H1 (cell line): ENCODE measurements at regions of chr2 and their contacts with region 1.

Region 1: DNA sequence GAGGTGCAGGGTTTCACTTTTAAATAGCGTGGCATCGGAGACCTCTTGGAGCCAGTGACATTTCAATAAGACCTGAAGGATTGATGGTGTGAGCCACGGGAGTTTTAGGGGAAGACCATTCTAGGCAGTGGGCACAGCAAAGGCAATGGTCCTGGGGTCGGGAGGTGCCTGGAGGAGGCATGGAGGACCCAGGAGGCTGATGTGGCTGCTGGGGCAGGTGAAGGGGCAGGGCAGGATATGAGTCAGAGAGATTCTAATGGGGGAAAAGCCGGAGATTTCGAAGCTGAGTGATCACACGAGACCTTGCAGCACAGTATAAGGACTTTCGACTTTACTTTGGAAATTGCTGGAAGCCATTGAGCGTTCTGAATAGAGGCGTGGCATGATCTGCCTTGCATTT is 79.6 kb upstream of the KCNE4 start:
- DNase-seq: no peak
- H3K4me3 ChIP-seq: no peak overlapping the region
- H3K27ac ChIP-seq: no peak overlapping the region
- H3K4me1 ChIP-seq: no peaks in the 10 kb centered on the region
- H3K27me3 ChIP-seq: peaks cover 0 to 3% (median 0%) of the 10 kb centered on the region in 4 experiments; a peak in 1 of 7 replicates
- CTCF ChIP-seq: no peak
- EP300 ChIP-seq: no peak
- POLR2A ChIP-seq: no peak
- RAD21 ChIP-seq: no peak

Region 2: GRCh38 chr2:222837511-222838056 is 134.8 kb before region 1 on chr2:
- CTCF ChIA-PET with region 1: no interaction called
- POLR2A ChIA-PET with region 1: no interaction called
- DNase-seq: no peak
- H3K4me3 ChIP-seq: no peak overlapping the region
- H3K27ac ChIP-seq: no peak overlapping the region
- H3K4me1 ChIP-seq: no peaks in the 10 kb centered on the region
- H3K27me3 ChIP-seq: no peaks in the 10 kb centered on the region
- CTCF ChIP-seq: no peak
- EP300 ChIP-seq: no peak
- POLR2A ChIP-seq: no peak
- RAD21 ChIP-seq: no peak

Region 3: GRCh38 chr2:223056701-223057418 is 84.4 kb after region 1 on chr2:
- CTCF ChIA-PET with region 1: no interaction called
- POLR2A ChIA-PET with region 1: no interaction called
- DNase-seq: no peak
- H3K4me3 ChIP-seq: no peak overlapping the region
- H3K27ac ChIP-seq: no peak overlapping the region
- H3K4me1 ChIP-seq: peaks cover under 1 to 7% (median 2%) of the 10 kb centered on the region in 4 experiments; a peak in 4 of 7 replicates
- H3K27me3 ChIP-seq: no peaks in the 10 kb centered on the region
- CTCF ChIP-seq: no peak
- EP300 ChIP-seq: no peak
- POLR2A ChIP-seq: no peak
- RAD21 ChIP-seq: no peak

Region 4: GRCh38 chr2:223101340-223102039 is 129.1 kb after region 1 on chr2:
- CTCF ChIA-PET with region 1: interaction called, 40 read pairs
- POLR2A ChIA-PET with region 1: interaction called, 5 read pairs
- DNase-seq: peak; percentile 67 to 72
- H3K4me3 ChIP-seq: no peak overlapping the region; a peak in 1 of 8 replicates
- H3K27ac ChIP-seq: no peak overlapping the region
- H3K4me1 ChIP-seq: peaks cover 2 to 6% (median 2%) of the 10 kb centered on the region in 4 experiments; a peak in 5 of 7 replicates
- H3K27me3 ChIP-seq: no peaks in the 10 kb centered on the region
- CTCF ChIP-seq: peak; percentile 45 to 81 (median 62)
- EP300 ChIP-seq: no peak
- POLR2A ChIP-seq: no peak
- RAD21 ChIP-seq: peak; percentile 76 to 84

Region 5: GRCh38 chr2:223142153-223142552 is 169.7 kb after region 1 on chr2:
- CTCF ChIA-PET with region 1: interaction called, 11 read pairs
- POLR2A ChIA-PET with region 1: no interaction called
- DNase-seq: no peak
- H3K4me3 ChIP-seq: no peak overlapping the region
- H3K27ac ChIP-seq: no peak overlapping the region
- H3K4me1 ChIP-seq: peaks cover 0 to 3% (median 0%) of the 10 kb centered on the region in 4 experiments; a peak in 2 of 7 replicates
- H3K27me3 ChIP-seq: no peaks in the 10 kb centered on the region
- CTCF ChIP-seq: no peak
- EP300 ChIP-seq: no peak
- POLR2A ChIP-seq: no peak
- RAD21 ChIP-seq: no peak